ENCODE measurements at regions of chr15 and their contacts with region 1.

Region 1: DNA sequence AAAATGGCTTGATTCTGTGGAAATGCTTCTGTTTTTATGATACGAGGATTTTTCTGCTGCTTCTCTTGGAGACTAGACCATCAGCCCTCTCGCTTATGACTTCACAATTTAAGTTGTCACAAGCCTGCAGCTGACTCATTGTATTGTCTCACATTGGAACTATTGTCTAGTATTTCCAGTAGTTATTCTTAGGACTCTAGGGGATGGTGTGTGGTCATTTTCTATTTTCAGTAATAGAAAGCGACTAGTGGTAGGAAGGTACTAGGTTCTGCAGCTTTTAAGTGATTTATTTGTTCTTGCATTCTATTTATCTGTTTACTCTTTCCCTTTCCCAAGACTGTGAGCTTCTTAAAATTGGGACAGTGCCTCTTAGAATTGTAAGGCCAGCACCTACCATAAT is 66.3 kb upstream of the CRTC3 start:
- DNase-seq: no peak
- ATAC-seq: peak; percentile 88 to 91 (median 89)
- H3K4me3 ChIP-seq: peak overlapping the region; percentile 30
- H3K27ac ChIP-seq: peak overlapping the region; percentile 86
- H3K4me1 ChIP-seq: peaks cover 43% of the 10 kb centered on the region
- H3K27me3 ChIP-seq: no peaks in the 10 kb centered on the region
- CTCF ChIP-seq: peak; percentile 25

Region 2: GRCh38 chr15:90143166-90143655 is 320.2 kb before region 1 on chr15:
- intact Hi-C with region 1: no loop called
- DNase-seq: peak; percentile 35 to 71
- ATAC-seq: peak; percentile 81 to 86 (median 84)
- H3K4me3 ChIP-seq: no peak overlapping the region
- H3K27ac ChIP-seq: no peak overlapping the region
- H3K4me1 ChIP-seq: peaks cover 12% of the 10 kb centered on the region
- H3K27me3 ChIP-seq: no peaks in the 10 kb centered on the region
- CTCF ChIP-seq: peak; percentile 50

Region 3: DNA sequence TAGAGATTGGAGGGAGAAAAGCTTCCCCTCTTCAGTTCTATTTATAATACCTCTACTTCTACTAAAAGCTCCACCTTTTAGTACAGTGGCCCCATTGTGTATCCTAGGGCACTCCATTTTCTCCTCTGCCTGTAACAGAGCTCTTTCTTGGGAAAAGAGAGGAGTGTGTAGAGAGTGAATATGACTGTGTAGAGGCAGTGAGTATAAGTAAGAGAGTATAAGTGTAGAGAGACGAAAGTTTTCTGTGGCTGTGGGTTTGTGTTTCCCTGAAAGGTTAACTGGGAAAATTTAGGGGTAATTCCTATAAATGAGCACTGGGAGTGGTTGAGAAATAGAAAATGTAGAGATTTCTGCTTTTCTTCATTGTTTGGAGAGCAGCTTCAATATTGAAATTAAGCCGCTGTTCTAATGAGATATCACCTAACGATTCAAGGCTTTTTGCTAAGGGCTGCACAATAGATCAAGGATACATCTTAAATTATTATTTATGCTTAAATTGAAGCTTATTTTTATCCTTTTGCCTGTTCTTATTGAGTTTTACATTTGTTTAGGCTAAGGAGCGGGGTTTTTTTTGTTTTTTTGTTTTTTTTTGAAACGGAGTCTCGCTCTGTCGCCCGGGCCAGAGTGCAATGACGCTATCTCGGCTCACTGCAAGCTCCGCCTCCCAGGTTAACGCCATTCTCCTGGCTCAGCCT is 68.5 kb before region 1 on chr15:
- intact Hi-C with region 1: loop called in 1 of 2 experiments (anchors 5 kb)
- DNase-seq: no peak
- ATAC-seq: no peak
- H3K4me3 ChIP-seq: peak overlapping the region; percentile 1
- H3K27ac ChIP-seq: peak overlapping the region; percentile 96
- H3K4me1 ChIP-seq: peaks cover 95% of the 10 kb centered on the region
- H3K27me3 ChIP-seq: no peaks in the 10 kb centered on the region
- CTCF ChIP-seq: no peak

Measured in psoas muscle (tissue), 8 donors.